Activated CD4-positive, alpha-beta T cell treated with anti-CD3 and anti-CD28 coated beads for 36 hours (primary cell): ENCODE measurements at regions of chr5 and their contacts with region 1.

Region 1: DNA sequence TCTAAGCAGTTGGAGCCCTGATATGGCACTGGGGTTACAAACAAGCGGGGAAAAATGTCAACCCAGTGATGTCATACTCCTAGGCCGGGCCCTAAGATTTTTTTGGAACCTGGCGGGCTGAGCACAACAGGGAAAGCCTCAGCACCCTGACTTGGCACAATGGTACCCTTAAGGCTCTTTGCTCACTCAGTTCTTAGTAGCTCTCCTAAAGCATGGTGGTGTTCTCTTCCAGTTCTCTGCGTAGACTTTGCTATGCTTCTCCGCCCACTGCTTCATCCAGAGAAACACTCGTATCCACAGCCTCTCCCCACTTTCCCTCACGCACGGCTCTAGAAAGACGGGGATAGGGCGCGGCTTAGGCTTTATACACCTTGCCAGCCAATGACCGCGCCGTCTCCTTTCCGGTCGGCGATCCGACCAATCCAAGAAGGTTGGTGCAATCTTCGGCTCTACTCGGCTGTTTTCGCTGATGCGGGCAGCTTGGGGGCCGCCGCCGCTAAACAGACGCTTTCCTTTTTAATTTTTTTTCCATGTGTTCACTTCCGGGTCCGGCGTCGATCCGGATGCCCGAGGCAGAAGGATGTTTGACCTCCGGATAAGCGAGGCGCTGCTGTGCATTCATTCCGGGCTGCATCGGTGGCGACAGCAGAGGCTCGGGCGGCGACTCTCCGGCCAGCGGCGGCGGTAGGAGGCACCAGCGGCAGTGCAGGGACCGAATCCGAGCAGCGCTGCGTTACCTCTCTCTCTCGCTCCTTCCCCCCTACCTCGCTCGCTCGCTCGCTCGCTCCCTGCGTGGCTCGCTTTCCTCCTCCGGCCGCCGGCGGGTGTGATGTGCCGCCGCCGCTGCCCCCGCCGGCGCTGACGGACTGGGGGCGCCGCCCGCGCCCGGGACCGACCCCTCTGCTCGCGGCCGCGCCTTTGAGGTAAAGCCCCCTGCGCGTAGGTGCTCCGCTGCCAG is at the start of gene CSNK1G3:
- DNase-seq: peak; percentile 96
- ATAC-seq: peak; percentile 94
- H3K4me3 Mint-ChIP-seq: peak within 1 kb of the TSS; percentile 92
- H3K27ac Mint-ChIP-seq: peak within 1 kb of the TSS; percentile 97
- H3K4me1 Mint-ChIP-seq: peaks cover 45% of the 10 kb centered on the region
- H3K27me3 Mint-ChIP-seq: peaks cover 4% of the 10 kb centered on the region
- total RNA-seq, gene CSNK1G3: 30.6 to 31.5 TPM

Region 2: GRCh38 chr5:122774861-122775549 is 736.9 kb before region 1 on chr5 and contains the start of gene SNX2:
- CTCF ChIA-PET with region 1: no interaction called
- POLR2A ChIA-PET with region 1: no interaction called
- intact Hi-C with region 1: loop called in 1 of 2 experiments (anchors 2 kb)
- DNase-seq: peak; percentile 95
- ATAC-seq: peak; percentile 94
- H3K4me3 Mint-ChIP-seq: peak within 1 kb of the TSS; percentile 94
- H3K27ac Mint-ChIP-seq: peak within 1 kb of the TSS; percentile 91
- H3K4me1 Mint-ChIP-seq: peaks cover 30% of the 10 kb centered on the region
- H3K27me3 Mint-ChIP-seq: peaks cover under 1% of the 10 kb centered on the region
- total RNA-seq, gene SNX2: 50.2 to 56.0 TPM

Region 3: GRCh38 chr5:122845229-122846050 is 666.5 kb before region 1 on chr5 and contains the start of gene SNX24:
- CTCF ChIA-PET with region 1: no interaction called
- POLR2A ChIA-PET with region 1: no interaction called
- intact Hi-C with region 1: loop called in 1 of 2 experiments (anchors 10 kb)
- DNase-seq: peak; percentile 83
- ATAC-seq: peak; percentile 88
- H3K4me3 Mint-ChIP-seq: peak within 1 kb of the TSS; percentile 78
- H3K27ac Mint-ChIP-seq: peak within 1 kb of the TSS; percentile 78
- H3K4me1 Mint-ChIP-seq: peaks cover 26% of the 10 kb centered on the region
- H3K27me3 Mint-ChIP-seq: peaks cover 3% of the 10 kb centered on the region
- total RNA-seq, gene SNX24: 4.0 to 4.9 TPM

Region 4: GRCh38 chr5:123438902-123439301 is 73.0 kb before region 1 on chr5:
- CTCF ChIA-PET with region 1: interaction called, 4 read pairs
- POLR2A ChIA-PET with region 1: interaction called, 7 read pairs
- intact Hi-C with region 1: loop called in 1 of 2 experiments (anchors 1 kb)
- DNase-seq: peak; percentile 58
- ATAC-seq: peak; percentile 76
- H3K4me3 Mint-ChIP-seq: peak overlapping the region; percentile 24
- H3K27ac Mint-ChIP-seq: peak overlapping the region; percentile 83
- H3K4me1 Mint-ChIP-seq: peaks cover 32% of the 10 kb centered on the region
- H3K27me3 Mint-ChIP-seq: peaks cover 2% of the 10 kb centered on the region

Region 5: DNA sequence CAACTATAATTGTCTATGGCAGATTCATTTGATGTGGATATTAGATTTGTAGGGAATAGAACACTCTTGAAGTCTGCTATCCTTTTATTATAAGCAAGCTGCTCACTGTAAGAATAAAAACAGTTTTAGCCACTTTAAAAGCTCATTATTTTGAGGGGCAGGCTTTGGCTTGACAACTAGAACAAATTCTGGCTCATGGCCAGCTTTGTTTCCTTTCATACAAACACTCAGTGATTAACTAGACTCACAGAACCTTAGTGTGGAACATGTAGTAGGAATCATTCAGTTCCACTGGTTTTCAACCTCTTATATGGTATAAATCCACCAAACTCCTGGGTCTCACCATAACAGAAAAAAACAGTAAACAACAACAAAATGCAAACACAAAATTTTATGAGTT is 61.3 kb before region 1 on chr5:
- CTCF ChIA-PET with region 1: interaction called, 3 read pairs
- POLR2A ChIA-PET with region 1: interaction called, 4 read pairs
- intact Hi-C with region 1: loop called (anchors 1 to 2 kb)
- DNase-seq: no peak
- ATAC-seq: no peak
- H3K4me3 Mint-ChIP-seq: no peak overlapping the region
- H3K27ac Mint-ChIP-seq: no peak overlapping the region
- H3K4me1 Mint-ChIP-seq: peaks cover 33% of the 10 kb centered on the region
- H3K27me3 Mint-ChIP-seq: peaks cover 9% of the 10 kb centered on the region

Region 6: GRCh38 chr5:123460296-123460729 is 51.6 kb before region 1 on chr5:
- CTCF ChIA-PET with region 1: interaction called, 3 read pairs
- POLR2A ChIA-PET with region 1: no interaction called
- intact Hi-C with region 1: loop called (anchors 1 kb)
- DNase-seq: peak; percentile 61
- ATAC-seq: peak; percentile 97
- H3K4me3 Mint-ChIP-seq: no peak overlapping the region
- H3K27ac Mint-ChIP-seq: peak overlapping the region; percentile 90
- H3K4me1 Mint-ChIP-seq: peaks cover 17% of the 10 kb centered on the region
- H3K27me3 Mint-ChIP-seq: no peaks in the 10 kb centered on the region

Region 7: GRCh38 chr5:123545506-123545905 is 33.6 kb after region 1 on chr5:
- CTCF ChIA-PET with region 1: no interaction called
- POLR2A ChIA-PET with region 1: no interaction called
- intact Hi-C with region 1: loop called in 1 of 2 experiments (anchors 5 kb)
- DNase-seq: peak; percentile 50
- ATAC-seq: no peak
- H3K4me3 Mint-ChIP-seq: no peak overlapping the region
- H3K27ac Mint-ChIP-seq: no peak overlapping the region
- H3K4me1 Mint-ChIP-seq: peaks cover 49% of the 10 kb centered on the region
- H3K27me3 Mint-ChIP-seq: no peaks in the 10 kb centered on the region